Mammary epithelial cell (primary cell): ENCODE measurements at regions of chr18 and their contacts with region 1.

Region 1: DNA sequence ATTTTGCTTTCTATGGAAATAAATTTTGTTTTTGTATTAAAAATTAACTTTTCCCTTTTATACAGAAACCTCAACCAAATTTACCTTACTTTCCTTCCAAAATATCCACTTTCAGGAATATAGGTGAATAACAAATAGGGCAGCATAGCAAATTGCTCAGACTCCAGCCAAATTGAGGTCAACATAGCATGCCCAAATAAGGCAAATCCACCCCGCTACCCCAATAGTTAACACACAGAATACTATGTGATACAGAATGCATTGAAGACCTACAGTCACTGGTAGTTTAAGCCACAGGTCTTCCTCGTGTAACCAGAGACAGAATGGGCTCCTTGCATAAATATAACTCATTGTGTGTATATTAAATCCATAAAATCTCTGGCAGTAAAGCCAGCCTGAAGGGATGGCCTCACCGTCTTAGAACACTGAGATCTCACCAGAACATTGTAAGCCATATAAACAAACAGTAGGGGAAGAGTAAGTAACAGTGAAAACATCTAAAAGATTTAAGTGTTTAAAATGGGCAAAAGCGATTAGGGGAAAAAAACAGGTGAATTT is 72.2 kb downstream of the PMAIP1 start:
- DNase-seq: no peak
- H3K4me3 ChIP-seq: no peak overlapping the region
- H3K27ac ChIP-seq: no peak overlapping the region
- H3K4me1 ChIP-seq: peaks cover 8% of the 10 kb centered on the region
- H3K27me3 ChIP-seq: no peaks in the 10 kb centered on the region
- CTCF ChIP-seq: no peak

Region 2: GRCh38 chr18:59837586-59837985 is 134.4 kb before region 1 on chr18:
- CTCF ChIA-PET with region 1: no interaction called
- dilution Hi-C with region 1: no loop called
- in situ Hi-C with region 1: loop called (anchors 10 kb)
- intact Hi-C with region 1: loop called (anchors 5 kb)
- DNase-seq: peak; percentile 64
- H3K4me3 ChIP-seq: no peak overlapping the region
- H3K27ac ChIP-seq: no peak overlapping the region
- H3K4me1 ChIP-seq: no peaks in the 10 kb centered on the region
- H3K27me3 ChIP-seq: no peaks in the 10 kb centered on the region
- CTCF ChIP-seq: peak; percentile 91 to 95

Region 3: DNA sequence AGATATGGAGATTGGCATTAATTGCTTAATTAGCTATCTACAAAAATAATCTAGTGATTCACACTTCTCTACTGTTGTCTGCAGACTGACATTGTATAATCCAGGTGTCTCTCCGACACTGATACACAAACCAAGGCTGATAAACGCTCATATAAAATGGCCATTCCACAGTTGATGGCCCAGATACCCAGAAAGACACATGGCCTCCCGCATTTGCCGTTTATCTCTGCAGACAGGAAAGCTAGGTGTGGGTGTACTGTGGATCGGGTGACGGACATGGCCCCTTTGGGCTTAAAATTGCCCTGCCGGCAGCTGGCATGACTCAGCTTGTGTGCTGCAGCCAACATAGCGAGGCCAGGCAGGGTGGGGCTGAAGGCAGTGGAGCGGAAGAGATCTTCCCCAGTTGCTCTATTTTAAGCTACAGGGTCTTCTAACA is 53.6 kb before region 1 on chr18:
- CTCF ChIA-PET with region 1: no interaction called
- dilution Hi-C with region 1: no loop called
- in situ Hi-C with region 1: loop called in 1 of 2 experiments (anchors 10 kb)
- intact Hi-C with region 1: no loop called
- DNase-seq: peak; percentile 74
- H3K4me3 ChIP-seq: no peak overlapping the region
- H3K27ac ChIP-seq: peak overlapping the region; percentile 35
- H3K4me1 ChIP-seq: peaks cover 47% of the 10 kb centered on the region
- H3K27me3 ChIP-seq: no peaks in the 10 kb centered on the region
- CTCF ChIP-seq: no peak

Region 4: DNA sequence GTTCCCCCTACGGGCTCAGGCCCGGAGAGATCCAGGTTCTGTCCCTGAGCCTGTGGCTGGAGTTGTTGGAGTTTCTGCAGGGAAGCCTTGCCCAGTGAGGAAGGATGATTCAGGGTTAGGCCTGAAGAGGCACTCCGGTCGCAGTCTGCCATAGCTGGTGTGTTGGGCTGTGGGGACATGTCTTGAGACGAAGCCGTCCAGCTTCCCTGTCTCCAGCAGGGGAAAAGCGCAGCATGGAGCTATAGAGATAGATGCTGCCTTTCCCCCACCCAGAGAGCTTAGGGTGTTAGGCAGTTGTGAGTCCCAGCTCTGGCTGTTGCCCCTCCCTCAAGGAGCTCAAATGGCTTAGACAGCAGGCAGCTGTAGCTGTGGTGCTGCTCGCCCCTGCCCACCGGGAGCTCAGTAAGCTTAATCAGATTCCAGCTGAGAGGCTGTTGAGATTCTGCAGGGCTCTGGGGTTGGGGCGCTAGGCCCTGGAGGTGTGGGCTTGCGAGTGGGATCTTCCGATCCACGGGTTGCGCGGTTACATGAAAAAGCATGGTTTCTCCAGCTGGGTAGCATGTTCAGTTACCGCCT is 31.7 kb after region 1 on chr18:
- CTCF ChIA-PET with region 1: no interaction called
- dilution Hi-C with region 1: no loop called
- in situ Hi-C with region 1: no loop called
- intact Hi-C with region 1: no loop called
- DNase-seq: no peak
- H3K4me3 ChIP-seq: no peak overlapping the region
- H3K27ac ChIP-seq: no peak overlapping the region
- H3K4me1 ChIP-seq: no peaks in the 10 kb centered on the region
- H3K27me3 ChIP-seq: no peaks in the 10 kb centered on the region
- CTCF ChIP-seq: no peak